Cardiac septum (tissue), 1 donor: ENCODE measurements at regions of chr5 and their contacts with region 1.

Region 1: DNA sequence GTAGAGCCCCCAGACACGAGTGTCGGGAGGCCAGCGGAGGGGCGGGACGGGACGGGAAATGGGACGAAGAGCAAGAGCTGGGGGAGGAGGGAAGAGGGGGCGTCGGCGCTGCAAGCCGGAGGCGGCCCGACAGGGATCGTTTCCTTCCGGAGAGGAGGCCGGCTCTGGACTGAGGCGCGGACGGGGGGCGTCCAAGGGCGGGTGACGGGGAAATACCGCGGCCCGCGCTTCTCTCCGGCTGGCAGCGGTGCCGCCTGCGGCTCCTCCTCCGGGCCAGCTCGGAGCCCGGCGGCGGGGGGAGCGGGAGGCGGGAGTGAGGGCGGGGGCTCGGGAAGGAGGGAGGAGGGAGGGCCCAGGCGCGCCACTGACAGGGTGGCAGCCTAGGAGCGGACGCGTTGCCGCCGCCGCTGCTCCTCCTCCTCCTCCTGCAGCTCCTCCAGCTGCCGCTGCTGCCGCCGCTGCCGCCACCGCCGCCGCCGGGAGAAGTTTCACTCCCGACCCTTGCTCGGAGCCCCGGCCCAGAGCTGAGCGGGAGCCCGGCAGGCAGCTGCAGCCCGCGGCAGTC is at the start of gene CHSY3:
- DNase-seq: peak; percentile 87
- total RNA-seq, gene CHSY3: 3.1 TPM

Region 2: GRCh38 chr5:129821477-129822131 is 82.6 kb before region 1 on chr5:
- intact Hi-C with region 1: no loop called
- DNase-seq: no peak

Region 3: GRCh38 chr5:130141659-130142320 is 237.6 kb after region 1 on chr5:
- intact Hi-C with region 1: loop called (anchors 2 kb)
- DNase-seq: no peak

Region 4: GRCh38 chr5:131109540-131110255 is 1205.5 kb after region 1 on chr5:
- intact Hi-C with region 1: loop called (anchors 10 kb)
- DNase-seq: no peak

Region 5: GRCh38 chr5:131165119-131165727 is 1261.0 kb after region 1 on chr5 and contains the start of gene HINT1:
- intact Hi-C with region 1: loop called (anchors 10 kb)
- DNase-seq: peak; percentile 96
- total RNA-seq, gene HINT1: 102 TPM

Region 6: DNA sequence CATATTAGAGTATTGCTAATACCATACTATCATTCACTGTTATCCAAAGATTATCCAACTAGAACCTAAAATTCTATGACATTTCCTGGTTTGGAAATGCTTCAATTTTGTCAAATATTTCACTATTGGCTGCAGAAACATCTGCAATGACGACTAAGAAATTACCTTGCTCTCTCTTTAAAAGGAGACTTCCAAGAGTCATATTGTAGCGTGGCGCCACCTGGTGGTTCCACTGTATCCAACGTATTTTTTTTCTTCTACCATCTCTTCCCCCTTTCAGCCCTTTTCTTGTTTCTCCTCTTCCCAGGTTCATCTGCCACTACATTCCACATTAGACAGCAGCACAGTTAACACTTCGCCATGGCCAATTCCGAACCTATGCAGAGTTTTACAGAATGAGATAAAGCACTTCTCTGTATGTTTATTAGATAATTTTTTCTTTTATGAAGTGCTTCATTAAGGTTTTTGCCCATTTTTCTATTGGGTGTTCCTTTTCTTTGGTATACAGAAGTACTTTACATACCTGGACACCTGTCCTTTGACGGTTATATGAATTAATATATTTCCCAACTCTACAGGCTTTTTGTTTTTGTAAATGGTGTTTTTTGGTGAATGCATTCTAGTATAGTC is 1513.2 kb after region 1 on chr5:
- intact Hi-C with region 1: loop called (anchors 10 kb)
- DNase-seq: no peak